Activated B cell treated with CpG ODN at 0.5 μM for 24 hours (primary cell): ENCODE measurements at regions of chr10 and their contacts with region 1.

Region 1: GRCh38 chr10:6014241-6014761 is 37.0 kb upstream of the IL15RA start:
- DNase-seq: no peak
- ATAC-seq: peak; percentile 66
- H3K4me3 Mint-ChIP-seq: no peak overlapping the region
- H3K27ac Mint-ChIP-seq: peak overlapping the region; percentile 78
- H3K4me1 Mint-ChIP-seq: peaks cover 22% of the 10 kb centered on the region
- H3K27me3 Mint-ChIP-seq: no peaks in the 10 kb centered on the region
- CTCF ChIP-seq: no peak

Region 2: GRCh38 chr10:5948999-5949759 is 65.1 kb before region 1 on chr10:
- CTCF ChIA-PET with region 1: no interaction called
- POLR2A ChIA-PET with region 1: no interaction called
- intact Hi-C with region 1: loop called (anchors 5 kb)
- DNase-seq: no peak
- ATAC-seq: peak; percentile 49
- H3K4me3 Mint-ChIP-seq: no peak overlapping the region
- H3K27ac Mint-ChIP-seq: no peak overlapping the region
- H3K4me1 Mint-ChIP-seq: peaks cover 9% of the 10 kb centered on the region
- H3K27me3 Mint-ChIP-seq: no peaks in the 10 kb centered on the region
- CTCF ChIP-seq: no peak

Region 3: DNA sequence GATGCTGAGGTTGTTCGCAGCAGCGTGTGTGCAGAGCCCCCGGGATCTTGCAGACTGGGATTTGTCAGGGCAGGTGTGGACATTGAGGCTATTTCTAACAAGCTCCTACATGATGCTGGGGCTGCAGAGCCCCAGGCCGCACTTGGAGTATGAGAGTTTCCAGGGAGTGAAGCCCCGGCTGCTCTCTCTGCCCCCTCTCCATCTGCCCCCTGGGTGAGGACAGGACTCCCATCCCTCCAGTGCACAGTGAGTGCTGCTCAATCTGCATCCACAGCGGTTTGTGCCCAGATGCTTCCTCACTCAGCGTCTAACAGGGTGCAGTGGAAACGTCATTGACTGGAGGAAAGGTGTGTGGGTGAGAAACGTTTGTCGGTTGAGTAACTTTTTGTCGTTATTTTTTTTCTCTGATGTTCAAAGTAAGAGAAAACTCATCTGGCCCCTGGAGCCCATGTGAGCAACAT is 22.6 kb after region 1 on chr10:
- CTCF ChIA-PET with region 1: interaction called, 5 read pairs
- POLR2A ChIA-PET with region 1: no interaction called
- intact Hi-C with region 1: loop called (anchors 2 kb)
- DNase-seq: no peak
- ATAC-seq: peak; percentile 66
- H3K4me3 Mint-ChIP-seq: peak overlapping the region; percentile 24
- H3K27ac Mint-ChIP-seq: peak overlapping the region; percentile 70
- H3K4me1 Mint-ChIP-seq: peaks cover 57% of the 10 kb centered on the region
- H3K27me3 Mint-ChIP-seq: no peaks in the 10 kb centered on the region
- CTCF ChIP-seq: no peak

Region 4: GRCh38 chr10:6045314-6045848 is 31.1 kb after region 1 on chr10:
- CTCF ChIA-PET with region 1: interaction called, 43 read pairs
- POLR2A ChIA-PET with region 1: interaction called, 21 read pairs
- intact Hi-C with region 1: loop called (anchors 1 kb)
- DNase-seq: no peak
- ATAC-seq: peak; percentile 9
- H3K4me3 Mint-ChIP-seq: peak overlapping the region; percentile 74
- H3K27ac Mint-ChIP-seq: peak overlapping the region; percentile 92
- H3K4me1 Mint-ChIP-seq: peaks cover 81% of the 10 kb centered on the region
- H3K27me3 Mint-ChIP-seq: no peaks in the 10 kb centered on the region
- CTCF ChIP-seq: no peak

Region 5: GRCh38 chr10:6151087-6151977 is 137.0 kb after region 1 on chr10:
- CTCF ChIA-PET with region 1: interaction called, 5 read pairs
- POLR2A ChIA-PET with region 1: no interaction called
- intact Hi-C with region 1: loop called (anchors 1 kb)
- DNase-seq: peak; percentile 53
- ATAC-seq: peak; percentile 83
- H3K4me3 Mint-ChIP-seq: peak overlapping the region; percentile 79
- H3K27ac Mint-ChIP-seq: peak overlapping the region; percentile 85
- H3K4me1 Mint-ChIP-seq: peaks cover 45% of the 10 kb centered on the region
- H3K27me3 Mint-ChIP-seq: no peaks in the 10 kb centered on the region
- CTCF ChIP-seq: no peak